Endothelial cell of umbilical vein (primary cell): ENCODE measurements at regions of chr6 and their contacts with region 1.

Region 1: GRCh38 chr6:87393022-87393622 is 14.7 kb upstream of the CFAP206 start:
- DNase-seq: peak; percentile 73
- H3K4me3 ChIP-seq: no peak overlapping the region
- H3K27ac ChIP-seq: no peak overlapping the region
- H3K4me1 ChIP-seq: no peaks in the 10 kb centered on the region
- H3K27me3 ChIP-seq: no peaks in the 10 kb centered on the region
- CTCF ChIP-seq: peak; percentile 32 to 39
- POLR2A ChIP-seq: no peak

Region 2: GRCh38 chr6:87139236-87139635 is 253.9 kb before region 1 on chr6:
- CTCF ChIA-PET with region 1: interaction called, 23 read pairs
- POLR2A ChIA-PET with region 1: no interaction called
- dilution Hi-C with region 1: no loop called
- intact Hi-C with region 1: loop called (anchors 1 kb)
- DNase-seq: peak; percentile 61
- H3K4me3 ChIP-seq: no peak overlapping the region
- H3K27ac ChIP-seq: no peak overlapping the region
- H3K4me1 ChIP-seq: no peaks in the 10 kb centered on the region
- H3K27me3 ChIP-seq: peaks cover 0 to 8% of the 10 kb centered on the region in 2 experiments
- CTCF ChIP-seq: peak; percentile 55 to 59
- POLR2A ChIP-seq: no peak

Region 3: GRCh38 chr6:87407901-87408720 is 15.0 kb after region 1 on chr6 and contains the start of gene CFAP206:
- CTCF ChIA-PET with region 1: interaction called, 45 read pairs
- POLR2A ChIA-PET with region 1: no interaction called
- dilution Hi-C with region 1: no loop called
- intact Hi-C with region 1: no loop called
- DNase-seq: peak; percentile 95
- H3K4me3 ChIP-seq: peak within 1 kb of the TSS; percentile 87 to 97 (median 96)
- H3K27ac ChIP-seq: peak within 1 kb of the TSS; percentile 48
- H3K4me1 ChIP-seq: peaks cover 10% of the 10 kb centered on the region
- H3K27me3 ChIP-seq: peaks cover 0 to 5% of the 10 kb centered on the region in 2 experiments
- CTCF ChIP-seq: peak in 1 of 2 donors; percentile 15
- POLR2A ChIP-seq: no peak
- total RNA-seq, gene CFAP206: 0.20 and 0.21 TPM in 2 replicates

Region 4: DNA sequence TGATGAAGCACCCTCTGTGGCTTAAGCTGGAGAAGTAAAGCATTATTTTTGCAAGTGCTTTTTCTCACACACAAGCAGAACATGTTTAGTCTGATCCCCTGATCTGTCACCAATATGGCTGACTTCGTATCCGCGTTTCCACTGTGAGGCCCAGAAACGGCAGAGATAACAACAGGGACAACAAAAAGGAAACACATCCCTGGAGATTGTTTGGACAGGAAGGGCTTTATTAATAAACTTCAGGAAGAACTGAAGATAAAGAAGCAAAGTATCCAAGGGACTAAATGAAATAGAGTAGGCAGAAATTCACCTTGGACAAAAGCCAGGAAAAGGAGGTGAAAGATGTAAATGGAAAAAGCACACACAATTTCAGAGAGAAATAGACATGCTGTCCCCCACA is 147.4 kb after region 1 on chr6:
- CTCF ChIA-PET with region 1: no interaction called
- POLR2A ChIA-PET with region 1: no interaction called
- dilution Hi-C with region 1: no loop called
- intact Hi-C with region 1: no loop called
- DNase-seq: peak; percentile 89
- H3K4me3 ChIP-seq: no peak overlapping the region
- H3K27ac ChIP-seq: no peak overlapping the region
- H3K4me1 ChIP-seq: no peaks in the 10 kb centered on the region
- H3K27me3 ChIP-seq: no peaks in the 10 kb centered on the region
- CTCF ChIP-seq: no peak
- POLR2A ChIP-seq: no peak

Region 5: DNA sequence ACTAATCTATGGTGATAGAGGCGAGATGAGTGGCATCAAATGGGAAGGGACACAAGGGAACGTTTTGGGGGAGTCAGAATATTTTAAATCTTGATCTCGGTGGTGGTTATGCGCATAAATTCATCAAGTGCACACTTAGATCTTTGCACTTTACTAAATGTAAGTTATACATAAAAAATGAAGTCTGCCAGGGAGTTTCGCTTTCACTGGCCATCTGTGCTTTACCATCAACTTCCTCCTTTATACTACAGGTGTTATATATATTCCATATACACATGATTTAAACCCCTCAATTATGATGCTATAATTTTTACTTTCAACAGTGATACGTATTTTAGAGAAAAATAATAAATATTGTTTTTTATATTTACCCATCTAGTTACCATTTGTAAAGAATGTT is 406.5 kb after region 1 on chr6:
- CTCF ChIA-PET with region 1: no interaction called
- POLR2A ChIA-PET with region 1: no interaction called
- dilution Hi-C with region 1: no loop called
- intact Hi-C with region 1: loop called (anchors 2 kb)
- DNase-seq: no peak
- H3K4me3 ChIP-seq: no peak overlapping the region
- H3K27ac ChIP-seq: no peak overlapping the region
- H3K4me1 ChIP-seq: no peaks in the 10 kb centered on the region
- H3K27me3 ChIP-seq: peaks cover 3 to 6% of the 10 kb centered on the region in 2 experiments
- CTCF ChIP-seq: no peak
- POLR2A ChIP-seq: no peak

Region 6: DNA sequence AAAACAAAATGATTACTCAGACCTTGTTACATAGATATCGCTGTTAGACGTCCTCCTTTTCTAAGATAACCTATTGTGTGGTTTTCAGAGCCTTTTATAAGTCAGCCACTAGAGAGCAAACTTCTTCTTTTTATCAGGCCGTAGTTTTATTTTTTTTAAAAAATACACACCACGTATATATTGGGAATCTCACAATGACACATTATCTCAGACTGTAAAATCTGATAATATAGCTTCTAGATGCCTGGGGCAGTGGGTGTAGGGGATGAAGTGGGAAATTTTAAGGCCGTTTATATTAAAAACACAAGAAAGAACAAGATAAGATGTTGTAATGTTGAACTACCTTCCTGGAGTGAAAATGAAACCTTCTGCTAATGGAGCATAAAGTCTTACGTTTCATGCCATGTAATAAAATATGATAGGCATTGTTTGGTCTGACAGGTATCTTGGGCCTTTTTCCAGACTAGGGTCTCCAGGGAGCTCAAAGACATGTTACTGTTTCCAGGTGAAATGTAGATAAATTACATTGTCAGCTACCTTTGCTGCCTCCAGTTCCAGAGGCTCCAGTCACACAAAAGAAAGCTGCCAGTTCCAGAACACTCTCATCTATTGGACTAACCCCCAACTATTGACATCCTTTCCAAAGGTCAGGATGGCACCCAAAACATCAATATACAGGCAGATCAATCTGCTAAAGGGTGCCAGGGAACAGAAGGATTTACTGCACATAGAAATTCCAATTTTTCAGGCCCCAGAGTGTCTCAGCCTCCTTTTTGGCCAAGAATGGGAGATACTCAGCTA is 439.1 kb after region 1 on chr6:
- CTCF ChIA-PET with region 1: interaction called, 3 read pairs
- POLR2A ChIA-PET with region 1: no interaction called
- dilution Hi-C with region 1: no loop called
- intact Hi-C with region 1: loop called (anchors 5 kb)
- DNase-seq: peak; percentile 64
- H3K4me3 ChIP-seq: peak overlapping the region; percentile 30 to 59 (median 33)
- H3K27ac ChIP-seq: no peak overlapping the region
- H3K4me1 ChIP-seq: no peaks in the 10 kb centered on the region
- H3K27me3 ChIP-seq: peaks cover 0 to 2% of the 10 kb centered on the region in 2 experiments
- CTCF ChIP-seq: peak; percentile 17 to 23
- POLR2A ChIP-seq: no peak

Region 7: DNA sequence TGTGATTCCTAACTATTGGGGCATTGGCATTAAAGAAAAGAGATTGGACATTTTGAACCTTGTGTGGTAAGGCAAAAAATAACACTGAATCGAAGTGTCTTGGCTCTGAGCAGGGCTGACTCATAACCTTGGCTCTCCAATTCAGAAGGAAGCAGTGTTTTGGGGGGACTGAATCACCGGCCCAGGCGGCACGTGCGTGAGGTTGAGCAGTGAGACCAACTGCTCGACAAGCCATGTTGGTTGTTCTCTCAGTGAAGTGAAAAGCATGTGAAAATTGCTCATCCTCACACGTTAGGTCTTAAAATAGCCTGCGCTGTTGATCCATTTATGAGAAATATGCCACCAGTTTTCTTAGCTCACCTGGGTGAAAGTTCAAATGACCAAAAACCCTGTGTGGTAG is 516.7 kb after region 1 on chr6:
- CTCF ChIA-PET with region 1: interaction called, 3 read pairs
- POLR2A ChIA-PET with region 1: no interaction called
- dilution Hi-C with region 1: no loop called
- intact Hi-C with region 1: loop called (anchors 10 kb)
- DNase-seq: peak; percentile 86
- H3K4me3 ChIP-seq: no peak overlapping the region
- H3K27ac ChIP-seq: peak overlapping the region; percentile 67
- H3K4me1 ChIP-seq: peaks cover 18% of the 10 kb centered on the region
- H3K27me3 ChIP-seq: no peaks in the 10 kb centered on the region
- CTCF ChIP-seq: no peak
- POLR2A ChIP-seq: no peak

Region 8: GRCh38 chr6:88492824-88493223 is 1099.7 kb after region 1 on chr6:
- CTCF ChIA-PET with region 1: interaction called, 25 read pairs
- POLR2A ChIA-PET with region 1: no interaction called
- dilution Hi-C with region 1: no loop called
- intact Hi-C with region 1: loop called (anchors 1 kb)
- DNase-seq: peak; percentile 41
- H3K4me3 ChIP-seq: no peak overlapping the region
- H3K27ac ChIP-seq: peak overlapping the region; percentile 11
- H3K4me1 ChIP-seq: peaks cover 4% of the 10 kb centered on the region
- H3K27me3 ChIP-seq: no peaks in the 10 kb centered on the region
- CTCF ChIP-seq: peak; percentile 40
- POLR2A ChIP-seq: no peak